Activated CD8-positive, alpha-beta memory T cell treated with anti-CD3 and anti-CD28 coated beads, Interleukin-2, amount 10 ng/mL, durations not matched to agents 7 days and 5 days (primary cell): ENCODE measurements at regions of chr13 and their contacts with region 1.

Region 1: GRCh38 chr13:50081679-50082425 is 66.6 kb downstream of the KCNRG start:
- DNase-seq: peak; percentile 99
- ATAC-seq: peak; percentile 81
- H3K4me3 Mint-ChIP-seq: peak overlapping the region; percentile 90
- H3K27ac Mint-ChIP-seq: peak overlapping the region; percentile 98
- H3K4me1 Mint-ChIP-seq: peaks cover 40% of the 10 kb centered on the region
- H3K27me3 Mint-ChIP-seq: no peaks in the 10 kb centered on the region

Region 2: DNA sequence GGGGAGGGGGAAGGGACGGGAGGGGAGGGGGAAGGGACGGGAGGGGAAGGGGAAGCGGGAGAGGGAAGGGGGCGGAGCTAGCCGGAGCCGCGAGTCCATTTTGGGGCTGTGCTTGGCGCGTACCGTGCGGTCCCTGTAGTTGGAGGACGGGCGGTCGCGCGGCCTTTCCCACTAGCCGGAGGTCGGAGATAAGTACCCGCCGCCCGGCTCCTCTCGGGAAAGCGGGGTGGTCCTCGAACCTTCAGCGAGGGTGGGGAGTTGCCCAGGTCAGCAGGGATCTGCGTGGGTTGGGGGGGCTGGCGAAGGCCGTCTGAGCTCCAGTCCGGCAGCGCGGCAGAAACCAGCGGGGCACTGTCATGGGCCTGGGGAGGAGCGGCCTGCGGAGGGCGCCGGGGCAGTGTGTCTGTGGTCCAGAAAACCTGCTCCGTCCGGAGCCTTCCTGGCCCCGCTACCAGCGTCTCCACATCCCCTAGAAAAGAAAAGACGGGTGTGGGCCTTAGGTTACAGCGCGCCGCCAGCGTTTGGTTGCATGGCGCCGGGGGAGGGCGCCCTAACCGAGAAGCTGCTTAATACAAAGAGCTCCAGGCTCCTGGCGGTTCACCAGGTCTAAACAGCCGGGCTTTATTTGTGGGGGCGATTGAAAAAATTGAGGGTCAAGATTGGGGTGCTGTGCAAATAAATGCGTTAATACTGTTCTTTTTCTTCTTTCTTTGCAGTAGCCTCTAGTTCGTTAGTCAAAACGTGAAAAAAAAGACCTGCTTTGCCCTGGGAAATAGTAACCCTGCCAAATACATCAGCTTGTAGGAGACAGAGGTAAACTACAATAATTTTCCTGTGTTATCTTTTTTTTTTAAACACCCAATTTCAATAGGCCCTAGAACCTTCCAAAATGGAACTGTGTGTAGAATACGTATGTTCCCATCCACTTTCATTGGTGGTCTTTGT is 84.6 kb before region 1 on chr13 and contains the start of gene TRIM13:
- CTCF ChIA-PET with region 1: interaction called, 37 read pairs
- DNase-seq: peak; percentile 89
- ATAC-seq: peak; percentile 82
- H3K4me3 Mint-ChIP-seq: peak within 1 kb of the TSS; percentile 77
- H3K27ac Mint-ChIP-seq: peak within 1 kb of the TSS; percentile 87
- H3K4me1 Mint-ChIP-seq: peaks cover 30% of the 10 kb centered on the region
- H3K27me3 Mint-ChIP-seq: no peaks in the 10 kb centered on the region
- total RNA-seq, gene TRIM13: 10.3 to 11.8 TPM

Region 3: DNA sequence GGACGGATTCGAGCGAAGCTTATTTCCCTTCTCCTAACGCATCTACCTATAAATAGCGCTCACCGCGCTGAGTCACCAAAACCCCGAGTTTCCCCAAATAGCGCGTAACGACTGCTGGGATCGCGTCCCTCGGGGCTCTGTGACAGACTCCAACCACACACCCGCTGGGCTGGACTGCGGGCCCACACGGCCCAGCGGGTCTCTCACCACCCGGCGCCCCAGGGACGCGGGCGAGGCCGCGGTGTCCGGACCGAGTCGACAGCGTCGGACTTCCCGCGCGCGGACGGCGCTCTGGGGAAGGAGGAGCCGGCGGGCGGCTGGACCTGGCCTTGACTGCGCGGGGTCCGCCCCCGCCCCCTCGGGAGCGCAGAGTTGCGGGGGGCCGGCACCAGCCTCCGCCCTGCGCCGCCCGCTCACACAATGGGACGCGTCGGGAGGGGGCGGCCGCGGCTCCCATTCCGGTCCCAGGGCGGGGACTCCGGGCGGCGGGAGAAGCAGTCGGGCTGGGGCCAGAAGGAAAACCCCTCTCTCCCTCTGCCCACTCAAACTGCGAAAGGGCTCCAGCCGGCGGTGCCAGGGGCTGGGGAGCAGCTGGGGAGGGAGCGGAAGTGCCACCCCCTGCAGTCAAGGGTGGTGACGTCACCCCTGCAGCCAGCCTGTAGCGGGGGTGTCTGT is 42.1 kb after region 1 on chr13:
- CTCF ChIA-PET with region 1: interaction called, 93 read pairs
- DNase-seq: peak; percentile 80
- ATAC-seq: peak; percentile 79
- H3K4me3 Mint-ChIP-seq: peak overlapping the region; percentile 79
- H3K27ac Mint-ChIP-seq: peak overlapping the region; percentile 82
- H3K4me1 Mint-ChIP-seq: peaks cover 46% of the 10 kb centered on the region
- H3K27me3 Mint-ChIP-seq: peaks cover 20% of the 10 kb centered on the region

Region 4: DNA sequence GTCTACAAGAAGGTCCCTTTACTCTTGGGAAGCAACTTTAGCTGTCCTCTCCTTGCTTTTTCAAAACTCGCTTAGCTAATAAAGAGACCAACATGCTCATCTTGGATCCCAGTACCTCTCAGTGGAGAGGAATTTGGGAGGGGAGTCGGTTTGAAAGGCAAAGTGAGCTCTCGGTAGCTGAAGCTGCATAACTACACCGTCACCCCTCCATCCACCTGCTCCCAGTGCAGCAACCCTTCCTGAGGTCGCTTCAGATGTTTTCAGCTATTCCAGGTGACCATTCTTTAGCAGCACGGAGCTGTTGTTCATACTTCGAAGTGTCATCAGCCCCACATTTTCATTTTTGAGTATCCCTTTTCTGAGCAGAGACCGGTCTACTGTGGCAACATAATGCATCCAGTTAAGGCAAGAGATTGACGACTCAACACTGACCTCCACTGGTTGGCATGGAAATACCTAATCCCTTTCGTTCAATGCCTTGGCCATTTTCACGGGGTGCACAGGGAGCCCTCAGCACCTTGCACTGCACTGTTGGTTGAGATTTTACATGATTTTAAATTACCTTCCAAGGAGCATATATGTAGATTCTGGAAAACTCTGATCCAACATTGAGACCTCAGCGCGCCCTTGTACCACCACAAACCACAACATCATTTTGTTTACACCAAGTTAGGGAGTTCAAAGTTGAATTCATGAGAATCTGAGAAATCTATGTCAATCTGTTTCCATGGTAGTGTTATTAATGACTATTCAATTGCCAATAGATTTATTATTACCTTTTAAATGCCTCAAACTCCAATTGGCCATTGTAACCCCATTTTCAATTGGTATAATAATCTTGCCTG is 719.5 kb after region 1 on chr13:
- CTCF ChIA-PET with region 1: interaction called, 11 read pairs
- DNase-seq: peak; percentile 80
- ATAC-seq: peak; percentile 99
- H3K4me3 Mint-ChIP-seq: no peak overlapping the region
- H3K27ac Mint-ChIP-seq: peak overlapping the region; percentile 3
- H3K4me1 Mint-ChIP-seq: peaks cover 27% of the 10 kb centered on the region
- H3K27me3 Mint-ChIP-seq: peaks cover 4% of the 10 kb centered on the region

Region 5: GRCh38 chr13:50991579-50992521 is 910.0 kb after region 1 on chr13:
- CTCF ChIA-PET with region 1: no interaction called
- DNase-seq: peak; percentile 77
- ATAC-seq: peak; percentile 88
- H3K4me3 Mint-ChIP-seq: peak overlapping the region; percentile 46
- H3K27ac Mint-ChIP-seq: peak overlapping the region; percentile 84
- H3K4me1 Mint-ChIP-seq: peaks cover 25% of the 10 kb centered on the region
- H3K27me3 Mint-ChIP-seq: no peaks in the 10 kb centered on the region